Activated T-helper 1 cell treated with anti-CD3 and anti-CD28 coated beads, Interleukin-12 subunit alpha, Interleukin-12 subunit beta, Interleukin-2, Interleukin-4 antibody, amounts not matched to agents 30 ng/mL and 10 ng/mL and 1 ng/mL, durations not matched to agents 14 hours and 24 hours and 36 hours (primary cell): ENCODE measurements at regions of chr17 and their contacts with region 1.

Region 1: DNA sequence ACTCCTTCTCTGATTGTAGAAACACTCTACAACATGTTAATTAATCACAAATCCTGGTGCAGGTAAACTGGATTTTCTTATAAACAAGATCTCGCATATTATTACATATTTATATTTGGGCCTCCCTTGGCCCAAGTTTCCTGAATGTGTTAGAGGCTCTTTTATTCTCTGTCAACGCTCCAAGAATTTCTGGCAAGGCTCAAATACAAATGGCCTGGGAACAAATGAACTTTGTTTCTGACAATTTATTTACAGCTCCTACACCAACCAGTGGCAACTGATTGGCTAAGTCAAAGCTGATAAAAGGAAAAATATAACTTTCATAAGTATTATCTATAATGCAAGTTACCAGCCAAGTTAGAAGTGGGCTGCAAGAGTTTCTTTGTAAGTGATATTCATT is 64.9 kb upstream of the CORO6 start:
- DNase-seq: no peak
- H3K4me3 Mint-ChIP-seq: no peak overlapping the region
- H3K27ac Mint-ChIP-seq: no peak overlapping the region
- H3K4me1 Mint-ChIP-seq: peaks cover 25% of the 10 kb centered on the region
- H3K27me3 Mint-ChIP-seq: no peaks in the 10 kb centered on the region

Region 2: DNA sequence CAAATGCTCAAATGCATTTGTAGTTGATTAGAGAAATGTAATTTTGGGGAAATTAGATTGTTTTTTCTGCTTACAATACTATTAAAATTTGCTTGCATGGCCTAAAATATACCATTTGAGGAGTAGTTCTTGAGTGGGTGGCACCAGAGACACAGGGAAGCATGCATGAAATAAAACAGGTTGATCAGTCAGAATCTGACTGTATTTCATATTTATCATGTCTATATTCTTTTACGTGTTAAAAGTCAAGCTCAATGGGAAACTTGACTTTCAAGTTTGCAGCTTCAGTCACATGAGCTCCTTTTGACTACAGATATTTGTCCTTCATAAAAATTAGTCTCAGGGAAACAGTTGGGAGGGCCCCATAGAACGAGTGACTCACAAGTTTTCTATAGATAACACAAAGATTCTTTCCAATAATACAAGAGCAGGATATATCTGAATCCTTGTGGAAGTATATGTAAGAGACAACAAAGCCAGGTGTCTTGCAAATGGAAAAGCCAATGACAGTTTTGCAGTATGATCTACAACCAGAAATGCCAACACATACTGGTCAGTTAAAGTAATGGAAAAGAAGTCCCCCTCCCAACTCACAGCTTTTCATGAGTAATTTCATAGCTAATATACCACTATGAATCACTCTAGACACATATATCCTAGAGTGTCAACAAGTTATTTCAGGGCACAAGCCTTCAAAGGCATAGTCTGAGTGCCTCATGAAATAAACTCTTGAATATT is 22.7 kb before region 1 on chr17:
- intact Hi-C with region 1: loop called (anchors 1 kb)
- DNase-seq: no peak
- H3K4me3 Mint-ChIP-seq: no peak overlapping the region
- H3K27ac Mint-ChIP-seq: peak overlapping the region; percentile 46
- H3K4me1 Mint-ChIP-seq: peaks cover 31% of the 10 kb centered on the region
- H3K27me3 Mint-ChIP-seq: no peaks in the 10 kb centered on the region

Region 3: GRCh38 chr17:29722411-29723198 is 35.0 kb after region 1 on chr17:
- intact Hi-C with region 1: loop called (anchors 5 kb)
- DNase-seq: no peak
- H3K4me3 Mint-ChIP-seq: peak overlapping the region; percentile 50
- H3K27ac Mint-ChIP-seq: peak overlapping the region; percentile 71
- H3K4me1 Mint-ChIP-seq: peaks cover 60% of the 10 kb centered on the region
- H3K27me3 Mint-ChIP-seq: no peaks in the 10 kb centered on the region